Natural killer cell (primary cell): ENCODE measurements at regions of chr14 and their contacts with region 1.

Region 1: DNA sequence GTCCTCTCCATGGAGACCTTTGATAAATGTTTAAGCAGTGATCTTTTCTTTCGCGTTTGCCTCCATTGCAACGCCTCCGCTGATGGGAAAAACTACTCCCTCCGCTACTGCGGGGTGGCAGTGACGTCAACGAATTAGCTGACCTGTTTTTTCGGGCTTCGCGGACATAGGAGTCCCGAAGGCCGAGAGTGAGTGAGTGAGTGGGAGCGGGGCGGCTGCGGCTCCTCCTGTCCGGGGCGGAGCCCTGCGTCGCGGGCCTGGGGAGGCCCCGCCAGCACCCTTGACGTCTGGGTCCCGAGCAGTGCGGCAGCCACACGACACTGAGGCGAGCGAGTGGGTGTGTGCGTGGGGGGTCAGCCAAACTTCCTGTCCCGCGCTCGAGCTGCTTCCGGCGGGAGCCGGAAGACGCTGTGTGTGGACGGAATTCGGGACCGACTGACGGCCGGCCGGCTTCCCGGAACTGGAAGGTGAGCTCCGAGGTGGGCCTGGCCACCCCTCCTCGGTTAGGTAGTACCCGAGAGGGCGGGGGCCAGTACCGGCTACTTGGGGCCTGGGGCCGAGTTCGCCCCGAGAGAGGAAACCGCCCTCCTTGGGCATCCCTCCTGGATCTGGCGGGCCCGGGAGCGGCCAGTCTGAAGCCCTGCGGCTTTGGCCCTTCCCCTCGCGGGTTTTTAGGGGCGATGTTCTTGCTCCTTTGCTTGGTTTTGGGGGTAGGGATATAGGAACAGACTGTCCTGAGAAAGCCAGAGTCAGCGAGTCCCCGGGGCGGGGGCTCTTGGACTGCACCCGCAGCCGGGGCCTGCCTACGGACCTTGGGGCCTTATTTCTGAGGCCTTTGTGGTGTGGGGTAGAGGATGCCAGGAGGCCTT is at the start of gene ZNF410:
- DNase-seq: peak; percentile 82 to 94
- ATAC-seq: peak; percentile 96 to 100 (median 98)
- H3K4me3 ChIP-seq: peak within 1 kb of the TSS; percentile 81
- H3K4me3 Mint-ChIP-seq: peak within 1 kb of the TSS; percentile 96
- H3K27ac ChIP-seq: peak within 1 kb of the TSS; percentile 97
- H3K27ac Mint-ChIP-seq: peak within 1 kb of the TSS; percentile 99
- H3K4me1 ChIP-seq: peaks cover 13% of the 10 kb centered on the region
- H3K4me1 Mint-ChIP-seq: peaks cover 39 to 50% of the 10 kb centered on the region in 2 donors
- H3K27me3 ChIP-seq: no peaks in the 10 kb centered on the region
- H3K27me3 Mint-ChIP-seq: no peaks in the 10 kb centered on the region
- CTCF ChIP-seq: no peak
- total RNA-seq, gene ZNF410: 111 to 118 (median 113) TPM

Region 2: GRCh38 chr14:73753959-73754882 is 132.5 kb before region 1 on chr14:
- intact Hi-C with region 1: loop called (anchors 5 kb)
- DNase-seq: peak in 1 of 2 donors; percentile 71
- ATAC-seq: peak; percentile 11 to 27 (median 13)
- H3K4me3 ChIP-seq: peak overlapping the region; percentile 12
- H3K4me3 Mint-ChIP-seq: peak overlapping the region; percentile 70
- H3K27ac ChIP-seq: peak overlapping the region; percentile 67
- H3K27ac Mint-ChIP-seq: peak overlapping the region; percentile 92 to 96
- H3K4me1 ChIP-seq: peaks cover 98% of the 10 kb centered on the region
- H3K4me1 Mint-ChIP-seq: peaks cover 86 to 100% of the 10 kb centered on the region in 2 donors
- H3K27me3 ChIP-seq: no peaks in the 10 kb centered on the region
- H3K27me3 Mint-ChIP-seq: no peaks in the 10 kb centered on the region
- CTCF ChIP-seq: no peak

Region 3: DNA sequence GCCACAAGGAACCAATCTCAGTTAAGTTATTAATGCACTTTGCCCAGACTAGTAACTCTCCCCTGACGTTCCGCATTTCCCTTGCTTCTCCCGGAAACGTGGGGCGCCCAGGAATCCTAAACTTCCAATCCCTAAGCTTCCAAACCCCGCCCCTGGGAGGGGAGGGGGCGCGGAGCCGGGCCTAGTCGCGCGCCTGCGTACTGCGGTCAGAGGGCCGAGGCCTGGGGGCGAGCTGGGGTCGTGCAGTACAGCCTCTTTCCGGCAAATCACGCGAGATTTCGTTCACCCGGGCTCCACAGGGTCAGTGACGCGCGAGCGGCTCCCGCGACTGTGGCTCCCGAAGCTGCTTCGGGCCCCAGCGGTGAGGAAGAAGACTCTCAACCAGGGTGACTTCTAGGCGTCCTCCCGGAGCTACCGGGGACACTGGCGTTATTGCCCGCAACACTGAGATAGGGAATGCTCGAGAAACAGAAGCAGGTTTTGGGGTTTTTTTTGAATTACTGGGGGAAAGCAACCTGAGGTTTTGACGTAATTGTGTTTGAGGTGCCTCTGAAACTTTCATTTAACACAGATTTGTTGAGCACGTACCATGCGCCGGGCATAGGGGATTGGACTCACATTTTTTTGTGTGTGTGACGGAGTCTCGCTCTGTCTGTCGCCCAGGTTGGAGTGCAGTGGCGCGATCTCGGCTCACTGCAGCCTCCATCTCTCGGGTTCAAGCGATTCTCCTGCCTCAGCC is 34.9 kb before region 1 on chr14 and contains the start of gene PTGR2:
- intact Hi-C with region 1: loop called (anchors 1 kb)
- DNase-seq: peak; percentile 86 to 97
- ATAC-seq: peak; percentile 93 to 97 (median 95)
- H3K4me3 ChIP-seq: peak within 1 kb of the TSS; percentile 55
- H3K4me3 Mint-ChIP-seq: peak within 1 kb of the TSS; percentile 97
- H3K27ac ChIP-seq: peak within 1 kb of the TSS; percentile 83
- H3K27ac Mint-ChIP-seq: peak within 1 kb of the TSS; percentile 97 to 99
- H3K4me1 ChIP-seq: peaks cover 14% of the 10 kb centered on the region
- H3K4me1 Mint-ChIP-seq: peaks cover 20 to 21% of the 10 kb centered on the region in 2 donors
- H3K27me3 ChIP-seq: no peaks in the 10 kb centered on the region
- H3K27me3 Mint-ChIP-seq: peaks cover 0 to 2% of the 10 kb centered on the region in 2 donors
- CTCF ChIP-seq: no peak
- total RNA-seq, gene PTGR2: 0.48 to 1.5 (median 1.5) TPM

Region 4: DNA sequence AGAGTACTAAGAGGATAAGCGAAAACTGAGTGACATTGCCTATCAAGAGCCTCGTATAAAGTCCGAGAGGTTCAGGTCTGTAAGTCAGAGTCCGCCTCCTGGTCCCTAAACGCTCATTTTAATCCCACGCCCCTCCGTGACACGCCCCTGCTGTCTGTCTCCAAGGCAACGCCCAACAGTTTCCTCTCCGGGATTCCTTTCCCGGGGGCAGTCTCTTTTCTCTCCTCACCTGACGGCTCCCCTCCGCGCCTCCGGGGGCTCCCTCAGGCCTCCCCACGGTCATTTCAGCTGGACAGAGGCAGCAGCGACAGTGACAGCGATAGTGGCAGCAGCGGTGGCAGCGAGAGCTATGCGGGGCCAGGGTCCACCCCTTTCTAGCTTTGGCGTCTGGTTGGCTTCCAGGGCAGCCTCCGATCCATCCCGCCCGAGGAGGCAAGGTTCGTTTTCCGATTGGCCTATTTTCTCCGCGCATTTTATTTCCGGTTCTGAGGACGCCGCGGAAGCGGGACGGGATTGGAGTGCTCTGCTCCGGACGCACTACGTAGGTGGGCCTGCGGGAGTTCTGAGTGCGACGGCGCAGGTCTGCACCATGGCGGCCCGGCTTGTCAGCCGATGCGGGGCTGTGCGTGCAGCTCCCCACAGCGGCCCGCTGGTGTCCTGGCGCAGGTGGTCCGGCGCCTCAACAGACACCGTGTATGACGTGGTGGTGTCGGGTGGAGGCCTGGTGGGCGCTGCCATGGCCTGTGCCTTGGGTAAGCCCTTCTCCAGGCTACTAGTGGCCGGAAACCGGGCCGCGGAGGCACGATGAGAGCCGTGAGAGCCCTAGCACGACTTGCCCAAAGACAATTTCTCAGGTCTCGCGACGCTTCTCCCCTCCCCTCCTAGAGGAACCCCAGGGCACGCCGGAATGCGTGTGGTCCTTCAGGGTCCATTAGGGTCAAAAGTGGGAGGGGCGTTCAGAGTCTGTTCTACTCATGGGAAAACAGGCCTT is 63.4 kb after region 1 on chr14 and contains the starts of genes COQ6 and FAM161B:
- intact Hi-C with region 1: loop called (anchors 2 kb)
- DNase-seq: peak; percentile 84 to 98
- ATAC-seq: peak; percentile 89 to 97 (median 90)
- H3K4me3 ChIP-seq: peak within 1 kb of the TSS; percentile 85
- H3K4me3 Mint-ChIP-seq: peak within 1 kb of the TSS; percentile 99
- H3K27ac ChIP-seq: peak within 1 kb of the TSS; percentile 77
- H3K27ac Mint-ChIP-seq: peak within 1 kb of the TSS; percentile 96
- H3K4me1 ChIP-seq: peaks cover 15% of the 10 kb centered on the region
- H3K4me1 Mint-ChIP-seq: peaks cover 15 to 19% of the 10 kb centered on the region in 2 donors
- H3K27me3 ChIP-seq: no peaks in the 10 kb centered on the region
- H3K27me3 Mint-ChIP-seq: no peaks in the 10 kb centered on the region
- CTCF ChIP-seq: no peak
- total RNA-seq, gene COQ6: 20.8 to 24.0 (median 21.7) TPM
- total RNA-seq, gene FAM161B: 2.5 to 4.8 (median 3.1) TPM